Dorsolateral prefrontal cortex (tissue), 120 donors: ENCODE measurements at regions of chr12 and their contacts with region 1.

Region 1: GRCh38 chr12:120580787-120581723 is at the start of gene POP5:
- DNase-seq: peak; percentile 97 to 99 (median 98)
- H3K4me3 ChIP-seq: peak within 1 kb of the TSS; percentile 62 to 99 (median 90)
- H3K27ac ChIP-seq: peak within 1 kb of the TSS in 55 of 59 donors; percentile 2 to 91 (median 74)
- H3K27me3 ChIP-seq: no peaks in the 10 kb centered on the region
- CTCF ChIP-seq: peak in 44 of 56 donors; percentile 10 to 68 (median 39)
- total RNA-seq, gene POP5: 18.5 to 43.3 (median 29.0) TPM

Region 2: DNA sequence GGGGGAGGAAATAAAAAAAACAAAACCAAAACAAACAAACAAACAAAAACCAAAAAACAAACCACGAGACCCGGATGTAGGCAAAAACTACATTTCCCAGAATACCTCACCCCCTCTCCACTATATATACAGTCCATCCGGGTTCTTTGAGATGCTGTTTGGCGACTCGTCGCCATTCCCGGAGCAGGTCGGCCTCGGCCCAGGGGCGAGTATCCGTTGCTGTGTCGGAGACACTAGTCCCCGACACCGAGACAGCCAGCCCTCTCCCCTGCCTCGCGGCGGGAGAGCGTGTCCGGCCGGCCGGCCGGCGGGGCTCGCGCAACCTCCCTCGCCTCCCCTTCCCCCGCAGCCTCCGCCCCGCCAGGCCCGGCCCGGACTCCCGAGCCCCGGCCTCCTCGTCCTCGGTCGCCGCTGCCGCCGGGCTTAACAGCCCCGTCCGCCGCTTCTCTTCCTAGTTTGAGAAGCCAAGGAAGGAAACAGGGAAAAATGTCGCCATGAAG is 46.8 kb before region 1 on chr12 and contains the start of gene RNF10:
- intact Hi-C with region 1: loop called in 1 of 2 experiments (anchors 5 kb)
- DNase-seq: peak; percentile 59 to 81 (median 78)
- H3K4me3 ChIP-seq: peak within 1 kb of the TSS; percentile 64 to 100 (median 97)
- H3K27ac ChIP-seq: peak within 1 kb of the TSS; percentile 63 to 96 (median 91)
- H3K27me3 ChIP-seq: no peaks in the 10 kb centered on the region
- CTCF ChIP-seq: peak in 13 of 56 donors; percentile 3 to 35 (median 24)
- total RNA-seq, gene RNF10: 177 to 288 (median 215) TPM

Region 3: GRCh38 chr12:120592121-120593049 is 11.3 kb after region 1 on chr12:
- intact Hi-C with region 1: no loop called
- DNase-seq: peak in 6 of 10 donors; percentile 19 to 62 (median 52)
- H3K4me3 ChIP-seq: no peak overlapping the region
- H3K27ac ChIP-seq: peak overlapping the region in 58 of 59 donors; percentile 9 to 92 (median 76)
- H3K27me3 ChIP-seq: no peaks in the 10 kb centered on the region
- CTCF ChIP-seq: no peak

Region 4: GRCh38 chr12:120710031-120710804 is 129.2 kb after region 1 on chr12 and contains the start of gene UNC119B:
- intact Hi-C with region 1: loop called (anchors 2 to 5 kb)
- DNase-seq: peak in 9 of 10 donors; percentile 40 to 82 (median 76)
- H3K4me3 ChIP-seq: peak within 1 kb of the TSS; percentile 69 to 97 (median 86)
- H3K27ac ChIP-seq: peak within 1 kb of the TSS; percentile 64 to 96 (median 91)
- H3K27me3 ChIP-seq: no peaks in the 10 kb centered on the region
- CTCF ChIP-seq: peak in 18 of 56 donors; percentile 6 to 44 (median 19)
- total RNA-seq, gene UNC119B: 19.6 to 43.0 (median 27.2) TPM

Region 5: GRCh38 chr12:120971299-120972179 is 390.5 kb after region 1 on chr12:
- intact Hi-C with region 1: loop called (anchors 1 to 2 kb)
- DNase-seq: peak in 2 of 10 donors; percentile 11 to 47
- H3K4me3 ChIP-seq: no peak overlapping the region
- H3K27ac ChIP-seq: no peak overlapping the region
- H3K27me3 ChIP-seq: no peaks in the 10 kb centered on the region
- CTCF ChIP-seq: peak; percentile 53 to 87 (median 78)

Region 6: GRCh38 chr12:121095544-121096198 is 514.6 kb after region 1 on chr12:
- intact Hi-C with region 1: loop called (anchors 5 to 10 kb)
- DNase-seq: peak; percentile 56 to 82 (median 72)
- H3K4me3 ChIP-seq: peak overlapping the region; percentile 31 to 73 (median 52)
- H3K27ac ChIP-seq: peak overlapping the region in 4 of 59 donors; percentile 21 to 29 (median 26)
- H3K27me3 ChIP-seq: no peaks in the 10 kb centered on the region
- CTCF ChIP-seq: peak; percentile 56 to 91 (median 80)